ENCODE measurements at regions of chr5 and their contacts with region 1.

Region 1: GRCh38 chr5:18314192-18314778 is 680.0 kb downstream of the TAF11L14 start:
- DNase-seq: no peak
- H3K4me3 ChIP-seq: no peak overlapping the region
- H3K27ac ChIP-seq: no peak overlapping the region
- H3K4me1 ChIP-seq: no peaks in the 10 kb centered on the region
- H3K27me3 ChIP-seq: no peaks in the 10 kb centered on the region
- CTCF ChIP-seq: peak; percentile 34 to 45

Region 2: DNA sequence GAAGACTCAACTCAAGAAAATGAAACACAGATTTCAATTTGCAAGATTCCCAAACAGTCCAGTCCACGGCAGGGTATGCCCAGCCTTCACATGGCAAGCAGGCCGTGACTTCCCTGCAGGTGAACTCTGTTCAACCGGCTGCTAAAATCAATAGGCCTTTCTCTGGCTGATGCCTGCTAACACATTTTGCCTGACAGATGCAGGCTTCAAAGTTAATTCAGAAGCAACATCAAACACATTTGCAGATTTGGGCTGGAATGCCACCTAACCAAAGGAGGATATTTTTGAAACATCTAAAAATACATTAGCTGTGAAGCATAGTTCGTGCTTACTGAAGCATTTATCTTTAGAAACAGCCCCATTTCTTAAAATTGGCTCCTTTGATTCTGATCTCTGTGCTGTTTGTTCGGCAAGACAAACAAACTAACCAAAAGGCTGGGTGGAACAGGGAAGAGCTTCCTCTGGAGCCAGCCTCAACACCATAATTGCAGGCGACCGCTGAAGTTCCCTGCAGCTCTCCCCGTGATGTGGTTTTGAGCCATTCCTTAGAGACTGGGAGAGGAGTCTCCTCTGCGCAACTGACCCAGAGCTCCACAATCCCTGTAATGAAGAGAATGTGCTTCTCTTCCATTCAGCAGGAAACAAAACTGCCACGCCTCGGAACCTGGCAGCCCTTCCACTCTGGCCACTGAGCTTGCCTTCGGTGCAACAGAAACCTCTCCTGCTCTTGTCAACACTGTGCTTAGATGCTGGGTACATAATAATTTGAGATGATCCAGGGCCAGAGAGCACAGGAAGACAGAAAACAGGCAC is 1504.7 kb before region 1 on chr5:
- CTCF ChIA-PET with region 1: no interaction called
- dilution Hi-C with region 1: no loop called
- in situ Hi-C with region 1: no loop called
- intact Hi-C with region 1: loop called (anchors 10 kb)
- DNase-seq: no peak
- H3K4me3 ChIP-seq: no peak overlapping the region
- H3K27ac ChIP-seq: no peak overlapping the region
- H3K4me1 ChIP-seq: peaks cover 22% of the 10 kb centered on the region
- H3K27me3 ChIP-seq: no peaks in the 10 kb centered on the region
- CTCF ChIP-seq: no peak

Region 3: DNA sequence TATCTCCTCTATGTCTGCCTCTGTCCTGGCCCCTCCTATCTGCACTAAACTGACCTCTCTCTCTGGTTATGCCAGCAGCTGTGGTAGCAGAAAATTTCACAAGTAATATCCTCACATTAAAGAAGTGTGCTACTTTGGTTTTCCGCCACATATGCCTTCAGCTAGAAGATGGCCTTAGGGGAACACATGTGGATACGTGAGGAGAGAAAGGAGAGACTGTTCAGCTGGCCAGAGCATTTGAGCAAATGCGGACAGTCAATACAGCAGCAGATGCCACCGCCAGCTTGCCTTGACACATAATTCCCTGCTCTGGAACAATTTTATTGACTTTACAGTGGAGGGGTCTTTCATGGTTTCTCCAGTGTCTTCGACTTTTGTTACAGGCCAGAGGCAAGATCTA is 245.5 kb before region 1 on chr5:
- CTCF ChIA-PET with region 1: no interaction called
- dilution Hi-C with region 1: no loop called
- in situ Hi-C with region 1: no loop called
- intact Hi-C with region 1: no loop called
- DNase-seq: no peak
- H3K4me3 ChIP-seq: no peak overlapping the region
- H3K27ac ChIP-seq: no peak overlapping the region
- H3K4me1 ChIP-seq: no peaks in the 10 kb centered on the region
- H3K27me3 ChIP-seq: peaks cover 1% of the 10 kb centered on the region
- CTCF ChIP-seq: no peak